ENCODE measurements at regions of chr11 and their contacts with region 1.

Region 1: DNA sequence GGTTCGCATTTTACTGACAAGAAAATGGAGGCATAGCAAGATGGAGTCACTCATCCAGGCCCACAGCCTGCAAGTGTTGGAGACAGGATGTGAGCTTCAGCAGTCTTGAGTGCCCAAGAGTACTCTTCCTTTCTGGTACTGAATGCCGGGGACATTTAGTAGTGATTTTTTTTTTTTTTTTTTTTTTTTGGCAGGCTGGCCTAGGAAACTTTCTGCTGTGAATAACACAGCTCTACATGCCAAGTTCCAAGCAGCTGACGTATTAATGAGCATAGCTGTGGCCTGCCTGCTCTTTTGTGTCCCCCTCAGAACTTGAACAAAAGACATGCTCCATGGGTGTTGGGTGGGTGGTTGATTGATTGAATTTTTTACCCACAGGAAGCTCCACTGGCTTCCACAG is 195.5 kb upstream of the CADM1 start:
- DNase-seq: peak; percentile 99
- H3K4me3 ChIP-seq: no peak overlapping the region
- CTCF ChIP-seq: no peak

Region 2: GRCh38 chr11:115637599-115638241 is 62.0 kb before region 1 on chr11:
- in situ Hi-C with region 1: loop called (anchors 5 kb)
- DNase-seq: no peak
- H3K4me3 ChIP-seq: no peak overlapping the region
- CTCF ChIP-seq: no peak

Region 3: GRCh38 chr11:115736146-115736545 is 36.4 kb after region 1 on chr11:
- in situ Hi-C with region 1: no loop called
- DNase-seq: no peak
- H3K4me3 ChIP-seq: no peak overlapping the region
- CTCF ChIP-seq: no peak

Region 4: GRCh38 chr11:115848611-115849010 is 148.9 kb after region 1 on chr11:
- in situ Hi-C with region 1: no loop called
- DNase-seq: no peak
- H3K4me3 ChIP-seq: no peak overlapping the region
- CTCF ChIP-seq: no peak

Measured in astrocyte of the cerebellum (primary cell).